ENCODE measurements at regions of chr12 and their contacts with region 1.

Region 1: GRCh38 chr12:6752921-6753771 is at the start of gene MLF2:
- DNase-seq: peak; percentile 95 to 99 (median 97)
- ATAC-seq: peak; percentile 93
- H3K4me3 ChIP-seq: peak within 1 kb of the TSS; percentile 99
- H3K4me3 Mint-ChIP-seq: peak within 1 kb of the TSS; percentile 91 to 97 (median 96)
- H3K27ac ChIP-seq: peak within 1 kb of the TSS; percentile 97
- H3K27ac Mint-ChIP-seq: peak within 1 kb of the TSS; percentile 97 to 100 (median 99)
- H3K4me1 ChIP-seq: peaks cover 0 to 12% of the 10 kb centered on the region in 2 donors
- H3K4me1 Mint-ChIP-seq: peaks cover 10 to 44% (median 23%) of the 10 kb centered on the region in 7 donors
- H3K27me3 ChIP-seq: no peaks in the 10 kb centered on the region
- H3K27me3 Mint-ChIP-seq: no peaks in the 10 kb centered on the region
- total RNA-seq, gene MLF2: 84.6 to 141 (median 117) TPM

Region 2: GRCh38 chr12:6355491-6356371 is 397.4 kb before region 1 on chr12:
- CTCF ChIA-PET with region 1: no interaction called
- POLR2A ChIA-PET with region 1: no interaction called
- intact Hi-C with region 1: no loop called
- DNase-seq: no peak
- ATAC-seq: peak; percentile 78
- H3K4me3 ChIP-seq: no peak overlapping the region
- H3K4me3 Mint-ChIP-seq: no peak overlapping the region
- H3K27ac ChIP-seq: no peak overlapping the region
- H3K27ac Mint-ChIP-seq: peak overlapping the region in 3 of 9 donors; percentile 19 to 79 (median 26)
- H3K4me1 ChIP-seq: no peaks in the 10 kb centered on the region
- H3K4me1 Mint-ChIP-seq: peaks cover 9 to 23% (median 12%) of the 10 kb centered on the region in 7 donors
- H3K27me3 ChIP-seq: no peaks in the 10 kb centered on the region
- H3K27me3 Mint-ChIP-seq: peaks cover 0 to 17% (median 0%) of the 10 kb centered on the region in 5 donors

Region 3: DNA sequence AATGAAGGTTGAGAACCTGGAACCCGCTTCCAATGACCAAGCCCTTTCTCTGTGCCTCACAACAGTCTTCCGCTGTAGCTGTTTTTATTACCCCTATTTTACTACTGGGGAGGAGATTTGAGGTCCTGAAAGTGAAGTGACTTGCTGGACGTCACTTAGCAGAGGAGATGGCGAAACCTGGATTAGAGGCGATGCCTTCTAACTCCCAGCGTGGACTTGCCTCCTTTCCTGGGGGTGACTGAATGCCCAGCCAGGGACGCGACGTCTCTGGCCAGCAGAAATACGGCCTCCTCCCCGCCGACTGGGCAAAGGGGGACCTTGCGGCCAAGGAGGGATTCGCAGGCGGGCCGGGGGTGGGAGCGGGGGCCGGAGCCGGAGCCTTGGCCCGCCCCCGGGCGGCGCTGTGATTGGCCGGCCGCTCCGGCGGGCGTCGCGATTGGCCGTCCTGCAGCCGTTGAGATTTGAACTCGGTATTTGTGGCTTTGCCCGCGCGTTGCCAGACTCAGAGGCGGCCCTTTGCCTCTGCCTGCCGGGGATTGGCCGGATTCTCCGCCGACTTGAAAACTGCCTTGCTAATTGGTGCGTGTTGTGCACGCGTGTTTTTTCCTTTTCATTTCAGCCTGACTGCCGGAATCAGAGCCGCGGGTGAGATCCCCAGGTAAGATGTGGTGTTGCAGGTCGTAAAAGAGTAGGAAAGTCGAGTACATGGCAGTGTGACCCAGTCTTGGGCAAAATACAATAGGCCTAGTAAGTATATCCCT is 259.5 kb before region 1 on chr12 and contains the start of gene NCAPD2:
- CTCF ChIA-PET with region 1: no interaction called
- POLR2A ChIA-PET with region 1: no interaction called
- intact Hi-C with region 1: loop called in 1 of 2 experiments (anchors 5 kb)
- DNase-seq: peak; percentile 82 to 97 (median 96)
- ATAC-seq: peak; percentile 91
- H3K4me3 ChIP-seq: peak within 1 kb of the TSS; percentile 98
- H3K4me3 Mint-ChIP-seq: peak within 1 kb of the TSS; percentile 86 to 98 (median 96)
- H3K27ac ChIP-seq: peak within 1 kb of the TSS; percentile 83
- H3K27ac Mint-ChIP-seq: peak within 1 kb of the TSS; percentile 87 to 97 (median 96)
- H3K4me1 ChIP-seq: peaks cover 22 to 24% of the 10 kb centered on the region in 2 donors
- H3K4me1 Mint-ChIP-seq: peaks cover 18 to 44% (median 37%) of the 10 kb centered on the region in 7 donors
- H3K27me3 ChIP-seq: no peaks in the 10 kb centered on the region
- H3K27me3 Mint-ChIP-seq: no peaks in the 10 kb centered on the region
- total RNA-seq, gene NCAPD2: 30.3 to 121 (median 38.4) TPM

Region 4: DNA sequence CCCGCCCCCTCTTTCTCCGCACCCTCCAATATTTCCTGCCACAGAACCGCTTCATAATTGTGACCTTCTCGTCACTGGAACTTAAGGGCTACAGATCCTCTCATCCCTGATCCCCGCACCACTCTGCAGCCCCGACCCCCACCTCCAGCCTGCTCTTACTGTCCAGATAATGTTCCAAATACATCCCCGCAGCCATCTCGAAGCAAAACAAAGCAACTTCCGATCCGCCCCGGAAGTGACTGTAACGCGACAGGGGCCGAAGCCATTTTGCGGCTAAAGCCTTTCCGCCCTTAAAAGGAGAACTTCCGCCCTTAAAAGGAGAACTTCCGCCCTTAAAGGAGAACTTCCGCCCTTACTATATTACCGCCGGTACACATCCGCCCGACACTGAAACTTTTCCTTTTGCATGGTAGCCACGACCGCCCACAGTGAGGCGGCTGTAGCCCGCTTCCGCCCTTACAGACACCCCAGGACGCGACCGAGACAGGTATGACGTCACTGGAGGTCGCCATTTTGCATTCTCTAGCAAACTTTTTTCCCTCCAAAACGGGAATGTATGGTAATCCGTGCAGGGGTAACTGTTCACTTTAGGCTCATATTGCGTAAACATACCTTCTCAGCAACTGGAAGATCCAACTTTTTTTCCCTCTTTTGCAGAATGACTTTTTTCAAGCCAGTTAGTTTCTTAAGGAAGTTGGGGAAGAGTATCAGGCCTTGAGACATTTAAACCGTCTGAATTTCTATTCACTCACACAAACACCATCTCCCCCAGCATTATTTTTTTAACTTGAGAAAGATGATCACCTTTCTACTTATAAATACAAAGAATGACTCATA is 90.0 kb before region 1 on chr12 and contains the start of gene ING4:
- CTCF ChIA-PET with region 1: interaction called, 5 read pairs
- POLR2A ChIA-PET with region 1: interaction called, 3 read pairs
- intact Hi-C with region 1: loop called (anchors 1 kb)
- DNase-seq: peak; percentile 79 to 99 (median 98)
- ATAC-seq: peak; percentile 99
- H3K4me3 ChIP-seq: peak within 1 kb of the TSS; percentile 92
- H3K4me3 Mint-ChIP-seq: peak within 1 kb of the TSS; percentile 92 to 99 (median 96)
- H3K27ac ChIP-seq: peak within 1 kb of the TSS; percentile 80
- H3K27ac Mint-ChIP-seq: peak within 1 kb of the TSS; percentile 91 to 99 (median 96)
- H3K4me1 ChIP-seq: peaks cover 15 to 16% of the 10 kb centered on the region in 2 donors
- H3K4me1 Mint-ChIP-seq: peaks cover 18 to 47% (median 36%) of the 10 kb centered on the region in 7 donors
- H3K27me3 ChIP-seq: no peaks in the 10 kb centered on the region
- H3K27me3 Mint-ChIP-seq: peaks cover 0 to 2% (median 0%) of the 10 kb centered on the region in 5 donors
- total RNA-seq, gene ING4: 33.1 to 101 (median 39.6) TPM

Region 5: GRCh38 chr12:6764011-6764828 is 11.1 kb after region 1 on chr12:
- CTCF ChIA-PET with region 1: interaction called, 22 read pairs
- POLR2A ChIA-PET with region 1: interaction called, 18 read pairs
- intact Hi-C with region 1: loop called (anchors 1 kb)
- DNase-seq: peak in 7 of 9 donors; percentile 40 to 69 (median 55)
- ATAC-seq: peak; percentile 88
- H3K4me3 ChIP-seq: no peak overlapping the region
- H3K4me3 Mint-ChIP-seq: peak overlapping the region; percentile 18 to 96 (median 67)
- H3K27ac ChIP-seq: no peak overlapping the region
- H3K27ac Mint-ChIP-seq: peak overlapping the region in 4 of 9 donors; percentile 9 to 71 (median 43)
- H3K4me1 ChIP-seq: peaks cover 7 to 16% of the 10 kb centered on the region in 2 donors
- H3K4me1 Mint-ChIP-seq: peaks cover 22 to 38% (median 31%) of the 10 kb centered on the region in 7 donors
- H3K27me3 ChIP-seq: no peaks in the 10 kb centered on the region
- H3K27me3 Mint-ChIP-seq: peaks cover 5 to 38% (median 26%) of the 10 kb centered on the region in 5 donors

Region 6: DNA sequence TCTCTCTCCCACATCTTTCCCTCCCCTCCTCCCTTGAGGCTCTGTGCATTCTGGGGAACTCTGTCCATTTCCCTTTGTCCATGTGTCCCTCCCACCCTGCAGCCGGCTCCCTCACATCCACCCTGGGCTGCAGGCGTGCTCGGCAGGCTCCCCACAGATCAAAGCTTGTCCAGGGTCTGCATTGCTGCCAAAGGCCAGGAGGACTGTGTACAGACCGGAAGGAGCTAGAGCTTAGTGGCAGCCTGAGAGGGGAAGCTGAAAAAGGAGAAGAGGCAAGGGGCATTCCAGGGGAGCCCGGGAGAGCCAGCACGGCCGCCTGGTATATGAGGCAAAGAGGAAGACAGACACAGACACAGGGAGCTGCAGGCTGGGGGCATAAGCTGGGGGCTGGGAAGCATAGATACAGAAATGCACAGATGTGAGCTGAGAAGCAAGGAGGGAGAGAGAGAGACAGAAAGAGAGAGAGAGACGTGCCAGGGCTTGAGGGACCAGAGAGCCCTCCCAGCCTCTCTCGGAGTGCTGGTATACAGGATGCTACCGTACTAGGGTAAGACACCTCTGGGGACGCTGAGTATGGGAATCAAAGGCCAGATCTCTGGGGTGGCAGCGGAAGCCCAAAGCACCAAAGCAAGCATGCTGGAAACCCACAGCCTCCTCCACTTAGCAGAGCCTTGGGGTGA is 39.5 kb after region 1 on chr12:
- CTCF ChIA-PET with region 1: interaction called, 18 read pairs
- POLR2A ChIA-PET with region 1: interaction called, 23 read pairs
- intact Hi-C with region 1: loop called (anchors 1 kb)
- DNase-seq: peak in 7 of 9 donors; percentile 66 to 79 (median 76)
- ATAC-seq: peak; percentile 76
- H3K4me3 ChIP-seq: peak overlapping the region; percentile 87
- H3K4me3 Mint-ChIP-seq: peak overlapping the region; percentile 85 to 99 (median 96)
- H3K27ac ChIP-seq: peak overlapping the region; percentile 86
- H3K27ac Mint-ChIP-seq: peak overlapping the region; percentile 88 to 99 (median 97)
- H3K4me1 ChIP-seq: peaks cover 0 to 29% of the 10 kb centered on the region in 2 donors
- H3K4me1 Mint-ChIP-seq: peaks cover 52 to 84% (median 72%) of the 10 kb centered on the region in 7 donors
- H3K27me3 ChIP-seq: no peaks in the 10 kb centered on the region
- H3K27me3 Mint-ChIP-seq: no peaks in the 10 kb centered on the region

Region 7: DNA sequence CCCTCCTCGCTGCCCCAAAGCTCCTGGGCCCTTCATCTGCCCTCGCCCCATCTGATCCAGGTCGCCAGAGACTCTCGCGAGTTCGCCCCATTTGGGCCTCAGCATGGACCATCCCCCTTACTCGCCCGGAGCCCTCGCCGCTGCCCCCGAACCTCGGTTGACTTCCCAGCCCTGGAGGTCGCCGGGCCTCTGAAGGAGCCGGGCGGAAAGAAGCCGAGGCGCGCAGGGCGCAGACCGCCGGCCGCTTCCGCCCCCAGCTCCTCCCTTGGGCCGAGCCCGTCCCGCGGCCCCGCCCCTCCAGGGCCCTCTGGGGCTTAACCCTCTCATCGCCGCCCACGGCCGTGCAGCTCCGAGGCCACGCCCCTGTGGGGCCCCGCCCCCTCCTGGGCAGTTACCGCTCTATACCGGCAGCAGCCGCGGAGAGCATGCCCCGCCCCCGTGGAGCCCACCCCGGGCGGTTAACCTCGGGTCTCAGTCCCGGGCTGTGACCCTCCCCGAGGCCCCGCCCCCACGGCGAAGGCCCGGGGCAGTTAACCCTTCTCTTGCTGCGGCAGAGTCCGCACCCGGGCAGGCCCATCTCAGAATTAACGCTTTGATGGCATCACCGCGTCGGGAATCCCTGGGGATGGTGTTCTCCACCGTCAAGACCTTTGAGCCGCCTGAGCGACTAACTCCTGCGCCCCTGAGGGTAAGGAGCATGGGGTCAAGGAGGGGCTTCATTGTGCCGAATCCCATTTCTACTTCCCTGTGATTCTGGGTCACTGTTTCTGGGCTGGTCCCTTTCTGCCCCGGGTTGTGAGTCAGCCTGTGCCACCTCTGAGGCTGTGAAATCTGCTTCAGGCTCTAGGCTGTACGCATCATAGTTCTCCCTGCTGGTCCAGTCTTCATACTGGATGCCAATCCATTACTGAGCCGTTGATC is 120.2 kb after region 1 on chr12 and contains the start of gene SPSB2:
- CTCF ChIA-PET with region 1: interaction called, 4 read pairs
- POLR2A ChIA-PET with region 1: interaction called, 11 read pairs
- intact Hi-C with region 1: loop called (anchors 1 to 2 kb)
- DNase-seq: peak; percentile 96 to 100 (median 98)
- ATAC-seq: peak; percentile 97
- H3K4me3 ChIP-seq: peak within 1 kb of the TSS; percentile 98
- H3K4me3 Mint-ChIP-seq: peak within 1 kb of the TSS; percentile 87 to 95 (median 91)
- H3K27ac ChIP-seq: peak within 1 kb of the TSS; percentile 77
- H3K27ac Mint-ChIP-seq: peak within 1 kb of the TSS; percentile 79 to 94 (median 88)
- H3K4me1 ChIP-seq: peaks cover 32 to 34% of the 10 kb centered on the region in 2 donors
- H3K4me1 Mint-ChIP-seq: peaks cover 34 to 58% (median 47%) of the 10 kb centered on the region in 7 donors
- H3K27me3 ChIP-seq: no peaks in the 10 kb centered on the region
- H3K27me3 Mint-ChIP-seq: no peaks in the 10 kb centered on the region
- total RNA-seq, gene SPSB2: 5.1 to 20.2 (median 11.2) TPM

Region 8: DNA sequence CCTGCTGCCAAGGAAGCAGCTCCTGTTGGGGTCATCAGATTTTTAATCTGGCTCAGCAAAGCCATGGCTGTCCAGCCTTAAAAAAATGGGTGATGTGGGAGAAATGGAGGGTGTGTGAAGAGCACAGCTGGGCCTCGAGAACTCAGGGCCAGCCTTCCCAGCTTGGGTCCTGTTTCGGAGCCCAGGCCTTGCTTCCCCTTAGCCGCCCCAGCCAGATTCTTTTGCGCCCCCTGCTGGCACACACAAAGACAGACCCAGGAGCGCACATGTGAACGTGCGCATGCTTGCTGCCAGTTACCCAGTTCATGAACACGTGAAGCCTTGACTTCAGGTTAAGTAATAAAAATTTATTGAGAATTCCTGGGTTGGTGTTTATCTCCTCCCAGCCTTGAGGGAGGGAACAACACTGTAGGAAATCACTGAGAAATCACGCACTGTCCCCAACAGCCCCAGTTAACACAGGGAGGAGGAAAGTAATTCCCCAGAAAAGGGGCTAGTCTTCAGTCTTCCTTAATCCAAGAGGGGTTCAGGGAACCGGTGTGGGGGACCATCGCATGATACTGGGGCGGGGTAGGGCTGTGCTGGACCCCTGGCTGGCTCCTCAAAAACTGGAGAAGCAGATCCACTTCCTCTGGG is 212.0 kb after region 1 on chr12:
- CTCF ChIA-PET with region 1: no interaction called
- POLR2A ChIA-PET with region 1: no interaction called
- intact Hi-C with region 1: loop called (anchors 1 to 2 kb)
- DNase-seq: peak; percentile 77 to 89 (median 85)
- ATAC-seq: peak; percentile 69
- H3K4me3 ChIP-seq: no peak overlapping the region
- H3K4me3 Mint-ChIP-seq: peak overlapping the region in 3 of 10 donors; percentile 9 to 23 (median 17)
- H3K27ac ChIP-seq: peak overlapping the region; percentile 68
- H3K27ac Mint-ChIP-seq: peak overlapping the region; percentile 75 to 95 (median 87)
- H3K4me1 ChIP-seq: peaks cover 45 to 60% of the 10 kb centered on the region in 2 donors
- H3K4me1 Mint-ChIP-seq: peaks cover 33 to 59% (median 56%) of the 10 kb centered on the region in 7 donors
- H3K27me3 ChIP-seq: no peaks in the 10 kb centered on the region
- H3K27me3 Mint-ChIP-seq: no peaks in the 10 kb centered on the region